GM23248 (cell line): ENCODE measurements at regions of chr11 and their contacts with region 1.

Region 1: DNA sequence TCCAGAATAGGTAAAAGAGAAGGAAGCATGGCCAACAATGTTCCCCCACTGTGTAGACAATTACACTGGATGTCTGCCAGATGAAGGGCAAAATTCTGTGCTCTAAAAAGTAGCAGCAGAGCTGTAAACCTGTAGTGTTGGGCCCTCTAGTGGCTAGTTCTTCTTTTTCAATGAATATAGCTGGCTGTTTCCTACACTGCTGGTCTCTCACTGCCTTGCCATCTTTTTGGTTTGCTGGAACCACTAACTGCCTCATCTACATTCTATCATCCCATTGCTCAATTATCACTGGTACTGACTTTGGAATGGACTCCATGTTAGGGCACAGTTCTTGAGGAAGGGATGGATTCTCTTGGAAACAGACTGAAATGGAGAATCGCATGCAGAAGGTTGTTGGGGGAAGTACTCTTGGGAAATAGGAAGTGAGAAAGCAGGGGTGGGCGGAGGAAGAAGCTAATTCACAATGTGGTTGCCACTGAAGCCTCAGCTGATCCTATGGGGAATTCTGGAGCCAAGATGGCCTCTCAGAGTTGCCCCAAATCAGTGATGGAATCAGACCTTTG is 17.9 kb downstream of the KCNE3 start:
- DNase-seq: peak; percentile 92
- H3K4me3 ChIP-seq: no peak overlapping the region
- H3K27ac ChIP-seq: no peak overlapping the region; the same call in 1 of the 2 replicates
- H3K4me1 ChIP-seq: 0 out of 2 replicates have a peak, but pooled peaks cover 5% of the 10 kb centered on the region
- H3K27me3 ChIP-seq: no peaks in the 10 kb centered on the region

Region 2: DNA sequence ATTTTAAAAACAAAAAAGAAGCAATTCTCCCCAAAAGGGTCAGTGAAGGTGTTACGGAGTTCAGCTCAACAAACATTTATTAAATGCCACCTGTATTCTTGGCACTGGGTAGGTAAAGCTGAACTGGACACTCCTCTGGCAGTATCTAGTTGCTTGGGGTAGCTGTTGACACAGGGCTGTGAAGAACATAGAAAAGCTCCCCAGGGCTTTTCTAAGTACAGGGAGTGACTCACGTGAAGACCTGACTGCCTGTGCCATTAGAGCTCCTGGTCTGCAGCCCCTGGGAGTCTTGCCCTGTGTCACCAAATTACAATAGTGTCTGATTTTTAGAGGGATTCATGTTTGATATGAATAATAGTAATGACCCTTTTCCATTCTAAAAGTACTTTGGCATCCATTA is 616.4 kb before region 1 on chr11:
- in situ Hi-C with region 1: no loop called
- DNase-seq: no peak
- H3K4me3 ChIP-seq: no peak overlapping the region
- H3K27ac ChIP-seq: no peak overlapping the region
- H3K4me1 ChIP-seq: no peaks in the 10 kb centered on the region
- H3K27me3 ChIP-seq: no peaks in the 10 kb centered on the region

Region 3: GRCh38 chr11:74253916-74254315 is 195.5 kb before region 1 on chr11:
- in situ Hi-C with region 1: loop called (anchors 5 kb)
- DNase-seq: no peak
- H3K4me3 ChIP-seq: no peak overlapping the region
- H3K27ac ChIP-seq: no peak overlapping the region
- H3K4me1 ChIP-seq: peaks cover 18% of the 10 kb centered on the region
- H3K27me3 ChIP-seq: no peaks in the 10 kb centered on the region

Region 4: DNA sequence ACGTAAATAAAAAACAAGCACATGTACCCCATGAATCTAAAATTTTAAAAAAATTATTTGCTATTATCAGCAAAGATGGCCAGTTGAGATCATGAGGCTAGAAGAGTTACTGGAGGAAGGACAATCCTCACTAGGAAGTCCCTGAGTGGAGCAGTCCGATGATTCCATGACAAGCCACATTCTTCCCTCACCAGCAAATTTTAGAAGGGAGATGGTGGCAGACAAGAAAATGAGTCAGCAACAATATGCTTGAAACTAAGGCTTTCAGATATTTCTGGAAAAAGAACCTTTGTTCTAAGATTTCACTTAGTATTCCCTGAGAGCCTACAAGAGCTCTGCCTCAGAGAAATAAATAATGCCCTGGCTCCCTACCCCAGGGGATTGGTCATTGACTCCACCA is 172.9 kb before region 1 on chr11:
- in situ Hi-C with region 1: no loop called
- DNase-seq: peak; percentile 84
- H3K4me3 ChIP-seq: no peak overlapping the region
- H3K27ac ChIP-seq: peak overlapping the region; percentile 91
- H3K4me1 ChIP-seq: peaks cover 41% of the 10 kb centered on the region
- H3K27me3 ChIP-seq: no peaks in the 10 kb centered on the region

Region 5: DNA sequence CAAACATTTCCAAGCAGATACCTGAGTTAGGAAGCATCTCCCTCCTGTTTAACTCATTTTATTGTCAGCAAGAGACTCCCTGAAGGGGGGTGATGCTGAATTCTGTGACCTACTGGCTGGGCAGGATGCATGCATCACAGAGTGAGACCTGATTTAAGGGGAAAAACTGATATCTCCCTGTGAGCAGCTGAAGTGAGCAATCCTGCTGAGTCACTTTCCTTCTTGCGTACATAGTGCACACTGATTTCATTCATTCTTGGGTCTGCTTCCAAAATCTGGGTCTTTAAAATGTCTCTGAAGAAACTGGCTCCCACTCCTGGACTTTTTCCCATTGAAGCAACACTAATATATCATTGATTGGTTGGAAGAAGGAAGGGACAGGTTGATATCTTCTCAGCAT is 161.3 kb before region 1 on chr11:
- in situ Hi-C with region 1: no loop called
- DNase-seq: peak; percentile 97
- H3K4me3 ChIP-seq: no peak overlapping the region
- H3K27ac ChIP-seq: peak overlapping the region; percentile 85
- H3K4me1 ChIP-seq: peaks cover 19% of the 10 kb centered on the region
- H3K27me3 ChIP-seq: no peaks in the 10 kb centered on the region

Region 6: DNA sequence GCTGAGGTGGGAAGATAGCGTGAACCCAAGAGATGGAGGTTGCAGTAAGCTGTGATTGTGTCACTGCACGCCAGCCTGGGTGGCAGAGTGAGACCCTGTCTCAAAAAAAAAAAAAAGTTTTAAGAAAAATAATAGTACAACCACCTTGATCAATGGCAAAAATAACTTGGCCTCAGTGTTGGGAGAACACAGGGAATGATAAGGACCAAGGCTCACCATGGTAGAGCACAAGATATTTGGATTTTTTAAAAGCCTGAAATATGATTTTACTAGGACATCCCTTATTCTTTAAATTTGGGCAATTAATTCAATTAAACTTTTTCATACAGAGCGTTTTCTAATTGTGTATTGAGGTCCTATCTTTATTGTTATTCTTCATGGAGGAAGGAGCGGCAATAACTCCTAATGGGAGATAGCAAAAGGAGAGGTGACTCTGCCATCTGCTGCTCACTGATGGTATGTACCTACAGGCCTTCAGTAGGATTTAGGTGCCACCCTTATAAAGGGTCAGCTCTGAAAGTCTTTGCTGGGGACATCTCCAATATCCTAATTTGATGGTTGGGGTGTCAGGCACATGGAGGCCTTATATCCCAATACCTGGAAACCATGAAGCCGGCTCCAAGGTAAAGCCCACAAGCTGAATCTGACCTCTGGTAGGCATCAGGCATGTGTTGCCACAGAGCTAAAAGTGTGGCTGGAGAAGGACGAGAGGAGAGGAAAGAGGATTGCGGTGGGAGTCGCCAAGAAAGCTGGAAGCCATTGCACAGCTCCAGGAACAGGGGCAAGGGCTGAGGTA is 121.0 kb after region 1 on chr11:
- in situ Hi-C with region 1: loop called (anchors 5 kb)
- DNase-seq: peak; percentile 73
- H3K4me3 ChIP-seq: no peak overlapping the region
- H3K27ac ChIP-seq: no peak overlapping the region
- H3K4me1 ChIP-seq: no peaks in the 10 kb centered on the region
- H3K27me3 ChIP-seq: no peaks in the 10 kb centered on the region; the same call in 1 of the 2 replicates

Region 7: DNA sequence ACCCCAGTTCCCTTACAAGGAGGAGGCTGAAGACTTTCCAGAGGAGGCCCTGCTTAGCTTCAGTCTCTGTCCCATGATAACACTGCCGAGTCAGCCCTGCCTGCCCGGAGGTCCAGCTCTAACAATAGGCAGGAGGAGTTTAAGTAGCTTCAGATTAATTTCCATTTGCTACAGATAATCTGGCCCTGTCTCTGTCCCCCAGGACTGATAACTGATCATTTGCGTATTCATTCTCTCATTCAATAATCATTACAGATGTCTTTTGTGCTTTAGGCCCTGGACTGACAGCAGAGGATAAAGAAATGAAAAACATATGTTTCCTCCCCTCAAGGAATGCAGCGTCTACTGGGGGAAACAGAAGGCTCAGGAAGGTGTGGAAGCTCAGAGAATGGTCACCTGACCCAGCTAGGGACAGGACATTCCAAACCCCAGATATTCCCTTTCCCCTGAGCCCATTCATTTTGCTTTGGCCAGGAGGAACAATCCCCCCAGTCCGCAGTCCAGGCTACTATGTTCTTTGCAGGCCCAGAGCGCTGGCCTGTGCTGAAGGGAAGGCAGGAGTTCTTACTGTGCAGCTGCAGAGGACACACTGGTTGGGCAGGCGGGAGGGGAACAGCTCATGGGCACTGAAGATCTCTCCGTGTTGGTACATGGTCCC is 261.0 kb after region 1 on chr11:
- in situ Hi-C with region 1: loop called (anchors 10 kb)
- DNase-seq: peak; percentile 72
- H3K4me3 ChIP-seq: no peak overlapping the region
- H3K27ac ChIP-seq: no peak overlapping the region
- H3K4me1 ChIP-seq: peaks cover 6% of the 10 kb centered on the region; the same call in 1 of the 2 replicates
- H3K27me3 ChIP-seq: no peaks in the 10 kb centered on the region